ENCODE measurements at regions of chr7 and their contacts with region 1.

Region 1: DNA sequence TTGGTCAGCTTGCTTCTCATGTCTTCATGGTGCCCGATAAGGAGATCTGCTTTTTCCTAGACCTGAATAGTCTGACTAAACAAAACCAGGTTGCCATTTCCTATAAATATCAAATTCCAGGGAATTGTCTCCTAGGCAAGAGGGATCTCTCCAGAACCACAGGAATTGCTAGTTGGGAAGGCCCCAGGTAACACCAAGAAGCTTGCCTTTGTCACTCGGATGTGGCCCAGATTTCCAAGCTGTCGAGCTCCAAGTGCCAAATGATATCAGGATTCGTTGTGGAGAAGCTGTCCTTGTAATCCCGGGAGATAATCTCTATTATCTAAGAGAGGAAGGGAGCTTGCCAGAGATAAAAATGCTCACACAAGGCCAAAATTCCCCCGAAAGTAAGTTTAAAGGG is 1288.5 kb upstream of the AUTS2 start:
- DNase-seq: no peak
- ATAC-seq: no peak
- H3K4me3 ChIP-seq: no peak overlapping the region
- H3K27ac ChIP-seq: no peak overlapping the region
- H3K4me1 ChIP-seq: no peaks in the 10 kb centered on the region
- H3K27me3 ChIP-seq: no peaks in the 10 kb centered on the region
- CTCF ChIP-seq: no peak

Region 2: GRCh38 chr7:68706291-68706690 is 396.5 kb after region 1 on chr7:
- CTCF ChIA-PET with region 1: interaction called, 13 read pairs
- POLR2A ChIA-PET with region 1: no interaction called
- in situ Hi-C with region 1: no loop called
- intact Hi-C with region 1: no loop called
- DNase-seq: no peak
- ATAC-seq: no peak
- H3K4me3 ChIP-seq: no peak overlapping the region
- H3K27ac ChIP-seq: no peak overlapping the region
- H3K4me1 ChIP-seq: no peaks in the 10 kb centered on the region
- H3K27me3 ChIP-seq: no peaks in the 10 kb centered on the region
- CTCF ChIP-seq: no peak